Panc1 (cell line): ENCODE measurements at regions of chr22 and their contacts with region 1.

Region 1: GRCh38 chr22:37581504-37581903 is 1.6 kb upstream of the LGALS2 start:
- DNase-seq: no peak
- ATAC-seq: no peak
- H3K4me3 ChIP-seq: no peak overlapping the region
- H3K27ac ChIP-seq: no peak overlapping the region
- H3K4me1 ChIP-seq: no peaks in the 10 kb centered on the region
- H3K27me3 ChIP-seq: no peaks in the 10 kb centered on the region
- CTCF ChIP-seq: no peak

Region 2: GRCh38 chr22:37566903-37567820 is 14.3 kb before region 1 on chr22:
- CTCF ChIA-PET with region 1: interaction called, 3 read pairs
- POLR2A ChIA-PET with region 1: interaction called, 19 read pairs
- in situ Hi-C with region 1: no loop called
- intact Hi-C with region 1: no loop called
- DNase-seq: no peak
- ATAC-seq: peak; percentile 70
- H3K4me3 ChIP-seq: no peak overlapping the region
- H3K27ac ChIP-seq: 0 out of 2 replicates have a peak overlapping the region, but pooled peaks have one; percentile 34
- H3K4me1 ChIP-seq: peaks cover 44% of the 10 kb centered on the region
- H3K27me3 ChIP-seq: no peaks in the 10 kb centered on the region
- CTCF ChIP-seq: peak; percentile 87

Region 3: GRCh38 chr22:37708580-37709444 is 127.3 kb after region 1 on chr22:
- CTCF ChIA-PET with region 1: no interaction called
- POLR2A ChIA-PET with region 1: no interaction called
- in situ Hi-C with region 1: no loop called
- intact Hi-C with region 1: no loop called
- DNase-seq: no peak
- ATAC-seq: no peak
- H3K4me3 ChIP-seq: no peak overlapping the region
- H3K27ac ChIP-seq: no peak overlapping the region
- H3K4me1 ChIP-seq: no peaks in the 10 kb centered on the region
- H3K27me3 ChIP-seq: no peaks in the 10 kb centered on the region
- CTCF ChIP-seq: no peak